Spleen (tissue), 13 donors: ENCODE measurements at regions of chr11 and their contacts with region 1.

Region 1: DNA sequence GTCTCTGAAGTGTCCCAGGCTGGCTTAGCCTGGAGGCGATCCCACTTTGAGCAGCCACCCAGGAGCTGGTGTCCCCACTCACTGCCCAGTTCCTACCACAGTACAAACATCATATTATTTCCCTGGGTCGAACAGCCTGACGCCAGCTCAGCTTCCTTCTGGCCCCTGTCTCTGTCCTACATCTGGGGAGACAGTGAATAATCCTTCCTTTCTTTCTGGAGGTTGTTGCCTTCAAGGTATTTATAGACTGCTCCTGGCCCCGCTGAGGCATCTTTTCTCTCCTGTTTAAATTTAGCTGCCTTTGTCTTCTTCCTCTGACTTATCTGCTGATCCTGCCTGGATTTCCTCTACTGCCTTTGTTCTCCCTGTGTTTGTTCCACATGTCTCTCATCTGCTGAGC is 56.8 kb upstream of the LRRC55 start:
- DNase-seq: no peak
- H3K4me3 ChIP-seq: no peak overlapping the region
- H3K27ac ChIP-seq: peak overlapping the region in 6 of 8 donors; percentile 15 to 65 (median 54)
- H3K4me1 ChIP-seq: peaks cover 3 to 30% (median 13%) of the 10 kb centered on the region in 6 donors
- H3K27me3 ChIP-seq: peaks cover 0 to 31% (median 0%) of the 10 kb centered on the region in 7 donors
- CTCF ChIP-seq: no peak
- POLR2A ChIP-seq: no peak

Region 2: DNA sequence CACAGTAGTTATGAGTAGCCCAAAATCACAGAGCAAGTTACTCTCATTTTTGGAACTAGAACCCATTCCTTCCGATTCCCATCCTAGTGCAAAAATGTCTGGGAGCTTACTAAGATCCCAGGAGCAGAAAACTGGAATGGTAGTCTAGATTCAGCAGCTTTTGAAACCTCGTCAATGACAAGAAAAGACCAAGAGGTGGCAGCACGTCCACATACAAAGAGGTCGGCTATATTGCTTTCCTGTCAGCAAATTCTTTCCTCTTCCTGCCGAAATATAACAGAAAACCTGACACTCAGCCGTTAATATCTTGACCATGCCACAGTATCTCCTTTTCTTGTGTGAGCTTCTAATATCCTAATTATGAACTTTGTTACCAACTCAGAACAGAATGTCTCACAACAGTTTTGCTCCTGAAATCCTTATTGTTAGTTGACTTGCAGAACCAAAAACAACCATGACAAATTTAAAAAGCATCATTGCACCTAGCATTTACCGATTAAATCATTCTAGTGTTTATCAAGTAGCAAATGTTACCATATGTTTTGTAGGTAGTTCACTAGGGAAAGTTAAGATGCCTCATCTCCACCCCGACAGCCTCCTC is 283.6 kb before region 1 on chr11:
- intact Hi-C with region 1: loop called (anchors 10 kb)
- DNase-seq: no peak
- H3K4me3 ChIP-seq: no peak overlapping the region
- H3K27ac ChIP-seq: peak overlapping the region in 1 of 8 donors; percentile 14
- H3K4me1 ChIP-seq: peaks cover 0 to 5% (median 0%) of the 10 kb centered on the region in 6 donors
- H3K27me3 ChIP-seq: no peaks in the 10 kb centered on the region
- CTCF ChIP-seq: peak in 10 of 11 experiments; percentile 18 to 69 (median 58)
- POLR2A ChIP-seq: no peak